Activated CD4-positive, alpha-beta memory T cell treated with anti-CD3 and anti-CD28 coated beads for 36 hours (primary cell): ENCODE measurements at regions of chr6 and their contacts with region 1.

Region 1: GRCh38 chr6:30541515-30542403 is 14.5 kb downstream of the GNL1 start:
- DNase-seq: peak; percentile 88
- H3K4me3 Mint-ChIP-seq: peak overlapping the region; percentile 63
- H3K27ac Mint-ChIP-seq: peak overlapping the region; percentile 50
- H3K4me1 Mint-ChIP-seq: peaks cover 36% of the 10 kb centered on the region
- H3K27me3 Mint-ChIP-seq: no peaks in the 10 kb centered on the region

Region 2: GRCh38 chr6:30463651-30464618 is 77.8 kb before region 1 on chr6:
- CTCF ChIA-PET with region 1: interaction called, 23 read pairs
- POLR2A ChIA-PET with region 1: no interaction called
- intact Hi-C with region 1: no loop called
- DNase-seq: peak; percentile 75
- H3K4me3 Mint-ChIP-seq: no peak overlapping the region
- H3K27ac Mint-ChIP-seq: no peak overlapping the region
- H3K4me1 Mint-ChIP-seq: peaks cover 44% of the 10 kb centered on the region
- H3K27me3 Mint-ChIP-seq: peaks cover 88% of the 10 kb centered on the region

Region 3: GRCh38 chr6:30500421-30501355 is 41.1 kb before region 1 on chr6:
- CTCF ChIA-PET with region 1: interaction called, 157 read pairs
- POLR2A ChIA-PET with region 1: interaction called, 3 read pairs
- intact Hi-C with region 1: no loop called
- DNase-seq: no peak
- H3K4me3 Mint-ChIP-seq: peak overlapping the region; percentile 64
- H3K27ac Mint-ChIP-seq: peak overlapping the region; percentile 58
- H3K4me1 Mint-ChIP-seq: peaks cover 43% of the 10 kb centered on the region
- H3K27me3 Mint-ChIP-seq: no peaks in the 10 kb centered on the region

Region 4: DNA sequence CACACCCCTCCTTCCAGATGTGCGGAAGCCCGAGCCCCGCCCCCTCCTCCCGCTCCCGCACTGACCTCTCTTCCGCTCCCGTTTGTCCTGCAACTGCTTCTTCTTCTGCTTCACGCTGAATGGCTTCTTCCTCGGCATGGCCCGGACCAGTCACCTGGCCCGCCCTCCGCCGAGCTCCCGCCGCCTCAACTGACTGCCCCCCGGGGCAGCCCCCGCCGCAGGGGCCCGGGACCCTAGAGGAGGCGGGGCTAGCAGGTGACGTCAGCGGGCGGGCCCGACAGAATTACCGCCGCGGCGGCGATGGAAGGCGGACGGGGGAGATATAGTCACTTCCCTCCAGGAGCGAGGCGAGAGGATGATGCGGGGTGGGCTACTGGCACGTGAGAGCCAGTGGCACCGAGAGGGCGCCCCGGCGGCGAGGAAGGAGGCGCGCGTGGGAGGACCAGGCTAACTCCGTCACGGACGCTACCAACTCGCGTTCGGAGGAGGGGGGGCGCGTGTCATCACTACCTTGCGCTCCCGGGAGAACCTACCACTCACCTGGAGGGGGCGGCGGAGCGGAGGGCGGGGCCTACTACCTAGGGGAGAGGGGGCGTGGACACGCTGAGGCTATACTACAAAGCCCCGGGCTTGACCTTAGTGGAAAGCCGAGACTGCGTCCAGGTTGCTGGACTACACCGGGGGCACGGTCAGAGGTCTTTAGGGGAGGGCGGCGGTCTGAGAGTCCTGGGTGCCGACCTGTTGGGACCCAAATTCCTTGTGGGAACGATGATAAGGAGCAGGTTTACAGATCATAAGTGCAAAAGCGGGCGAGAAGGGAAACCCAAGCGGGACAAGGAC is 14.5 kb after region 1 on chr6 and contains the start of gene GNL1:
- CTCF ChIA-PET with region 1: interaction called, 134 read pairs
- POLR2A ChIA-PET with region 1: interaction called, 4 read pairs
- intact Hi-C with region 1: loop called (anchors 1 kb)
- DNase-seq: peak; percentile 100
- H3K4me3 Mint-ChIP-seq: peak within 1 kb of the TSS; percentile 97
- H3K27ac Mint-ChIP-seq: peak within 1 kb of the TSS; percentile 98
- H3K4me1 Mint-ChIP-seq: peaks cover 44% of the 10 kb centered on the region
- H3K27me3 Mint-ChIP-seq: no peaks in the 10 kb centered on the region
- total RNA-seq, gene GNL1: 94.0 to 95.8 TPM

Region 5: DNA sequence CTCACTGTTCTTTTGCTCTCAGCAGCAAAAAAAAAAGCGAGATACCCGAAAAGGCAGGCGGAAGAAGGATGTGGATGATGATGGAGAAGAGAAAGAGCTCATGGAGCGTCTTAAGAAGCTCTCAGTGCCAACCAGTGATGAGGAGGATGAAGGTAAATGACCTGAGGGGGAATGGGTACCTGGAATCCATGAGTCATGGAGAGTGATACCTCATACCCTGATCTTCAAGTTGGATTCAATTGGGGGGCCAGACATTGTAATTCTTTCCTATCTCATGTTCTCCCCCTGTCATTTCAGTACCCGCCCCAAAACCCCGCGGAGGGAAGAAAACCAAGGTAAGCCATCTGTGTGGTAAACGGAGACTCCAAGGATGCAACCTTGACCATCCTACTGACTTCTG is 36.3 kb after region 1 on chr6:
- CTCF ChIA-PET with region 1: interaction called, 12 read pairs
- POLR2A ChIA-PET with region 1: no interaction called
- intact Hi-C with region 1: no loop called
- DNase-seq: no peak
- H3K4me3 Mint-ChIP-seq: no peak overlapping the region
- H3K27ac Mint-ChIP-seq: no peak overlapping the region
- H3K4me1 Mint-ChIP-seq: peaks cover 30% of the 10 kb centered on the region
- H3K27me3 Mint-ChIP-seq: no peaks in the 10 kb centered on the region

Region 6: DNA sequence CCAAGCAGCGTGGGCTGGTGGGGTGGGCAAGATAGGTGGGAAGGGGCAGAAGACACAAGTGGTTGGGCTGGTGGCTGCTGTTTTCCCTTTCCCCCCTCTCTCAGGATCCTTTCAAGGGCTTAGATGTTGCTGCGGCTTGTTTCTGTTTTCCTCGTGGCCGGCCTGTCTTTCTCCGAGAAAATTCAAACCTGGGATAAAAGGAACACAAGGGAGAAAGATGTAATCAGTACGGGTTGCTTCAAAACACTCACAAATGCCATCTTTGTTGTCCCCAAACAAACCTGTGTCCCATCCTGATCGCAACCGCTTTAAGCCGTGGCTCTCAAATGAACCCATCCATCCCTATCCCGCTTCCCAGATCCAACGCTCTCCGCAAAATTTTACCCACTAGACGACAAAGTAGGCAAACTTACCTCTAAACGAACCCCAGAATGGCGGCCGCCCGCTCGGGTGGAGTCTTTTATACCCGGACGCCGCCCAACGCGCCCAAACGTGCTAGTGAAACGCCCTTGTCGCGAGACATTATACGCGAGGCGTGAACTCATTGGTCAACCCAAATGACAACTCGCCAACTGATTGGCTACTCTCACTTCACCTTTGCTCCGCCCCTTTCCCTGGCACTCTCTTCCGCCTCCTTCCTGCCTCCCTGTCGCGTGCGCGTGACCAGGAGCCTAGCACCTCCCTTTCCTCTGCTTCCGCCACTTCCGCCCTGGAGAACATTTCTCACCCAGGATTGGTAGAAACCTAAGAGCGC is 75.2 kb after region 1 on chr6 and contains the start of gene PPP1R10:
- CTCF ChIA-PET with region 1: interaction called, 22 read pairs
- POLR2A ChIA-PET with region 1: no interaction called
- intact Hi-C with region 1: loop called (anchors 5 kb)
- DNase-seq: peak; percentile 99
- H3K4me3 Mint-ChIP-seq: peak within 1 kb of the TSS; percentile 97
- H3K27ac Mint-ChIP-seq: peak within 1 kb of the TSS; percentile 98
- H3K4me1 Mint-ChIP-seq: peaks cover 45% of the 10 kb centered on the region
- H3K27me3 Mint-ChIP-seq: peaks cover 5% of the 10 kb centered on the region
- total RNA-seq, gene PPP1R10: 64.5 to 67.4 TPM